Psoas muscle (tissue), 8 donors: ENCODE measurements at regions of chr1 and their contacts with region 1.

Region 1: GRCh38 chr1:48109390-48110013 is 112.3 kb upstream of the TRABD2B start:
- DNase-seq: no peak
- ATAC-seq: peak in 1 of 4 donors; percentile 63
- H3K4me3 ChIP-seq: no peak overlapping the region
- H3K27ac ChIP-seq: no peak overlapping the region
- H3K4me1 ChIP-seq: no peaks in the 10 kb centered on the region
- H3K27me3 ChIP-seq: no peaks in the 10 kb centered on the region
- CTCF ChIP-seq: peak; percentile 71

Region 2: GRCh38 chr1:48202030-48202752 is 92.7 kb after region 1 on chr1:
- intact Hi-C with region 1: loop called (anchors 2 to 5 kb)
- DNase-seq: peak; percentile 53 to 75
- ATAC-seq: peak; percentile 42 to 69 (median 62)
- H3K4me3 ChIP-seq: no peak overlapping the region
- H3K27ac ChIP-seq: no peak overlapping the region
- H3K4me1 ChIP-seq: no peaks in the 10 kb centered on the region
- H3K27me3 ChIP-seq: no peaks in the 10 kb centered on the region
- CTCF ChIP-seq: peak; percentile 78

Region 3: GRCh38 chr1:48246727-48247126 is 137.2 kb after region 1 on chr1:
- intact Hi-C with region 1: no loop called
- DNase-seq: peak in 1 of 2 donors; percentile 31
- ATAC-seq: no peak
- H3K4me3 ChIP-seq: no peak overlapping the region
- H3K27ac ChIP-seq: no peak overlapping the region
- H3K4me1 ChIP-seq: no peaks in the 10 kb centered on the region
- H3K27me3 ChIP-seq: no peaks in the 10 kb centered on the region
- CTCF ChIP-seq: no peak

Region 4: GRCh38 chr1:48498096-48498791 is 388.7 kb after region 1 on chr1:
- intact Hi-C with region 1: loop called (anchors 5 to 10 kb)
- DNase-seq: peak; percentile 76 to 86
- ATAC-seq: peak; percentile 81 to 96 (median 85)
- H3K4me3 ChIP-seq: no peak overlapping the region
- H3K27ac ChIP-seq: no peak overlapping the region
- H3K4me1 ChIP-seq: no peaks in the 10 kb centered on the region
- H3K27me3 ChIP-seq: no peaks in the 10 kb centered on the region
- CTCF ChIP-seq: peak; percentile 91

Region 5: DNA sequence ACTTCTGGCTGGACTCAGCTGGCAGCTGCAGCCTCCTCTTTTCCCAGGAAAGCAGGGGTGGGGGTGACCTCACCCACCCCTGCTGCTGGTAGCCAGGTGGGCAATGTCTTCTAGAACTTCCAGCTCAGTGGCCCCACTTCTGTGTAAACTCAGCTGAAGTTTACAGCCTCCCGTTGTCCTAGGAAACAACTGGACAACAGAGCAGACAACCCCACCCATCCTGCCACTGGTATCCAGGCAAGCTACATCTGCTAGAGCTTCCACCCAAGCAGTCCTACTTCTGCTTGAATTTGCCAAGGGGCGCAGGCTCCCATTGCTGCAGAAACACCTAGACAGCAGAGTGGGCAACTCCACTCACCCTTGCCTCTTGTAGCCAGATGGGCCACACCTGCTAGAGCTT is 976.8 kb after region 1 on chr1:
- intact Hi-C with region 1: no loop called
- DNase-seq: no peak
- ATAC-seq: no peak
- H3K4me3 ChIP-seq: no peak overlapping the region
- H3K27ac ChIP-seq: no peak overlapping the region
- H3K4me1 ChIP-seq: no peaks in the 10 kb centered on the region
- H3K27me3 ChIP-seq: no peaks in the 10 kb centered on the region
- CTCF ChIP-seq: no peak